ENCODE measurements at regions of chr7 and their contacts with region 1.

Region 1: DNA sequence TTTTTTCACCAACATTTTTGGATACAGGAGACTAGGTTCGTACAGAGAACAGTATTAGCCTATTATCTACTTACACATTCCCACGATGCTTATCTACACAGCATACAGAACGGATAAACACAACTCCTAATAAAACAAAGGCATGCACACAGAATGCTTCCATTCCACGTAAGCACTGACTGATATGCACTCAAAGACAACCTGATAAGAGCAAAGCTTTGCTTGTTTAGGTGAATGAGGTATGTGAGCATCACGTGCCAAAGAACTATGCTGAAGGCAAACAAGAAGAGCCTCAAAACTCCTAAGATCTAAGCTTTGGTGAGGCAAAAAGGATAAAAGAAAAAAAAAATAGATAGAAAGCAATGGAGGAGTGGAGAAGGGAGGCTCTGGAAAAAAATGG is 413.5 kb upstream of the LRRN3 start:
- DNase-seq: no peak
- ATAC-seq: no peak
- H3K4me3 ChIP-seq: no peak overlapping the region
- H3K27ac ChIP-seq: no peak overlapping the region
- H3K4me1 ChIP-seq: no peaks in the 10 kb centered on the region
- H3K27me3 ChIP-seq: no peaks in the 10 kb centered on the region
- CTCF ChIP-seq: no peak
- POLR2A ChIP-seq: no peak
- RAD21 ChIP-seq: no peak

Region 2: DNA sequence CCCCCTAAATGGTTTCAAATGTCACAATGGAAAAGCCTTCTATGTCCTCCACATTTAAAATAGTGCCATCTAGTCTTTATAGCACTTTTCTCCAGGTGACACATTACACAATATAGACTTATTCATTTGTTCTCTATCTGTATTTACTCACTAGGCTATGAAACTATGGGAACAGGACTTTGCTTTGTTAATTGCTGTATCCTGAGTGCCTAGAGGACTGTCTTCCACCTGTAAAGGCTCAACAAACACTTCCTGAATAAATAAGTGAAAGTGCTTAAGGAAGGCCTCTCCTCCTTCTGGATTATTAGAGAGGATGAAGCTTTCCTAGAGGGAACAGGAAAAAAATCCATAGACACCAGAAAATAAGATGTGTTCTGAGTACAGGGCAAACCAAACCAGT is 15.9 kb after region 1 on chr7:
- CTCF ChIA-PET with region 1: no interaction called
- POLR2A ChIA-PET with region 1: no interaction called
- RAD21 ChIA-PET with region 1: no interaction called
- intact Hi-C with region 1: loop called (anchors 1 kb)
- DNase-seq: no peak
- ATAC-seq: no peak
- H3K4me3 ChIP-seq: no peak overlapping the region
- H3K27ac ChIP-seq: no peak overlapping the region
- H3K4me1 ChIP-seq: no peaks in the 10 kb centered on the region
- H3K27me3 ChIP-seq: no peaks in the 10 kb centered on the region
- CTCF ChIP-seq: no peak
- POLR2A ChIP-seq: no peak
- RAD21 ChIP-seq: no peak

Region 3: DNA sequence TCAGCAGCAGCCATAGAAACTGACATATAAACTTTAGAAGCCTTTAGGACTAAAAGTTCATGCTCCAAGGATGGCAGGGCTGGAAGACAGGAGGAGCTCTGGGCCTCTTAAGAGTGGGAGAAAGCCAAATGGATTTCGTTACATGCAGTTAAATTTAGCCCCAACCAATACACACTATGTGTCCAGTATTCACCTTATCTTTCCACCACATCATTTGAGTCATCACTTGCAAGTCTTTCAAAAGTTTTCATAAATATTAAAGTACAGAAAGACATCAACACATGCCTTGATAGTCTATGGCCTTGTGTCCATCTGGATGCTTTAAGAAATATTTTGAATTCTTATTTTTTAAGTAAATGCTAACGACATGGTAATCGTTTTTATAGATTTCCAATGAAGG is 21.2 kb after region 1 on chr7:
- CTCF ChIA-PET with region 1: no interaction called
- POLR2A ChIA-PET with region 1: no interaction called
- RAD21 ChIA-PET with region 1: no interaction called
- intact Hi-C with region 1: loop called (anchors 1 kb)
- DNase-seq: no peak
- ATAC-seq: no peak
- H3K4me3 ChIP-seq: no peak overlapping the region
- H3K27ac ChIP-seq: no peak overlapping the region
- H3K4me1 ChIP-seq: no peaks in the 10 kb centered on the region
- H3K27me3 ChIP-seq: no peaks in the 10 kb centered on the region
- CTCF ChIP-seq: no peak
- POLR2A ChIP-seq: no peak
- RAD21 ChIP-seq: no peak

Measured in HCT116 (cell line).